Activated T-helper 2 cell treated with anti-CD3 and anti-CD28 coated beads, Interferon-gamma antibody, Interleukin-2, Interleukin-4, amounts not matched to agents 10 μg/mL and 5 μg/mL and 100 μg/mL, durations not matched to agents 14 hours and 24 hours and 36 hours (primary cell): ENCODE measurements at regions of chr14 and their contacts with region 1.

Region 1: GRCh38 chr14:21215130-21215878 is 53.9 kb downstream of the HNRNPC start:
- DNase-seq: no peak
- H3K4me3 Mint-ChIP-seq: peak overlapping the region; percentile 51
- H3K27ac Mint-ChIP-seq: peak overlapping the region; percentile 78
- H3K4me1 Mint-ChIP-seq: peaks cover 43% of the 10 kb centered on the region
- H3K27me3 Mint-ChIP-seq: no peaks in the 10 kb centered on the region

Region 2: DNA sequence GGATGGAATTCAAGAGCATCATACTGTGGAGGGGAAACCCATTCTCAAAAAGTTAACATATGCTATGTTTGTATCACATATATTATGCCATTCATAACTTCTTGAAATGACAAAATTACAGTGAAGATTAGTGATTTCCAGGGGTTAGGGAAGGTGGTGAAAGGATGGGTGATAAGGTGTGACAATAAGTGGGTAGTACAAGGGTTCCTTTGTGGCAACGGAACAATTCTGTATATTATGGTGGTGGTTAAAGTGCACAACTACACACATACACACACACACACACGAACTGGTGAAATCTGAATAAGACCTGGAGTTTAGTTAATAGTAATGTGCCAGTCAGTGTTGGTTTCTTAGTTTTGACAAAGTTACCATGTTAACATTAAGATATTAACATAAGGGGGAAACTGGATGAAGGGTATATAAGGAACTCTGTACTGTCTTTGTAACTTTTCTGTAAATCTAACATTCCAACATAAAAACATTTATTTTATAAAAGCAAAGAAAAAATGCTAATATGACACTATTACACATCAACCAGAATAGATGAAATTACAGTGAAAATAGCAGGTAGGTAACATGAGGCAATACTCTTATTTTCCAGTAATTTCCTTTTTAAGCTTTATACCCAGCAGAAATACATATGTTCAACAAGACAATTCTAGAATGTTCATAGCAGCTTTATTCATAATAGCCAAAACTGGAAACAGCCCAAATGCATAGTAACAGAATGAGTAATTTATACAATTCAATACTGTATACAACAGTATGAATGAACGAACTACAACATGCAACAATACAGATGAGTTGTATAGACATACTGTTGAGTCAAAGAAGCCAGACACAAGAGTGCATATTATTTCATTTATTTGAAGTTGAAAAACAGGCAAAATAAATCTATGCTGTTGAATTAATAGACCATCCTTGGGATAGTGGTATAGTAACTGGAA is 15.4 kb before region 1 on chr14:
- intact Hi-C with region 1: no loop called
- DNase-seq: no peak
- H3K4me3 Mint-ChIP-seq: no peak overlapping the region
- H3K27ac Mint-ChIP-seq: no peak overlapping the region
- H3K4me1 Mint-ChIP-seq: peaks cover 2% of the 10 kb centered on the region
- H3K27me3 Mint-ChIP-seq: peaks cover 5% of the 10 kb centered on the region

Region 3: DNA sequence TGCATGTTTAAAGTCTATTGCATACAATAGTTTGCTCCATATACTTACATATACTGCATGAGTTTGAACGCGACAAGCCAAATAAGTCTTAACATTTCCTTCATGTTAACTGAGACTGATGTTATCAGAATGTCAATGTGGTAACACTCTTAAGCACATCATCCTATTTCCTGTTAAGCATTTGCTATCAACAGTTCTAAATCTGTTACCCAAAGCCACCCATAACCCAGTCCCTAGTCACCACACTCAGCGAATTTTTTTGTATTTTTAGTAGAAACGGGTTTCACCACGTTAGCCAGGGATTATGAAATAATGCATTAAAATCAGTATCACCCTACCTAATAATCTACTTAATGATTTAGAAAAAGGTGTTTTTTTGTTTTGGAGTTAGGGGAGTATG is 14.5 kb after region 1 on chr14:
- intact Hi-C with region 1: loop called (anchors 2 kb)
- DNase-seq: no peak
- H3K4me3 Mint-ChIP-seq: peak overlapping the region; percentile 69
- H3K27ac Mint-ChIP-seq: peak overlapping the region; percentile 96
- H3K4me1 Mint-ChIP-seq: peaks cover 66% of the 10 kb centered on the region
- H3K27me3 Mint-ChIP-seq: no peaks in the 10 kb centered on the region

Region 4: DNA sequence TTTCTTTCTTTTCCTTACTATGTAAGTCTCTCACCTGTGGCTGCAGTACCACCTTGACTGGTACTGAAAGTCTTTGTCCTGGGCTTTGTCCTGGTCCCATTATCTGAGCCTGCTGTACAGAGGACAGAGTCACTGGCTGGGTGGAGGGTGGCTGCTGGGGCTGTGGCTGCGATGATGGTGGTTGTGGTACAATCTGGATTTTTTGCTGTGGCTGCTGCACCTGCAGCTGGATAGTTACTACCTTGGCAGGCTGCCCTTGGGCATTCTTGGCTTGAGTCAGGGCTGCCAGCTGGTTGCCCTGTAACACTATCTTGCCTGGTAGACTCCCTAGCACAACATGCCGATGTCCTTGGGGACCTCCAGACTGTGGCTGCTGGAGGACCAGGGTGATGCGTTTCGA is 213.6 kb after region 1 on chr14:
- intact Hi-C with region 1: no loop called
- DNase-seq: no peak
- H3K4me3 Mint-ChIP-seq: no peak overlapping the region
- H3K27ac Mint-ChIP-seq: no peak overlapping the region
- H3K4me1 Mint-ChIP-seq: peaks cover 9% of the 10 kb centered on the region
- H3K27me3 Mint-ChIP-seq: no peaks in the 10 kb centered on the region